ENCODE measurements at regions of chr1 and their contacts with region 1.

Region 1: DNA sequence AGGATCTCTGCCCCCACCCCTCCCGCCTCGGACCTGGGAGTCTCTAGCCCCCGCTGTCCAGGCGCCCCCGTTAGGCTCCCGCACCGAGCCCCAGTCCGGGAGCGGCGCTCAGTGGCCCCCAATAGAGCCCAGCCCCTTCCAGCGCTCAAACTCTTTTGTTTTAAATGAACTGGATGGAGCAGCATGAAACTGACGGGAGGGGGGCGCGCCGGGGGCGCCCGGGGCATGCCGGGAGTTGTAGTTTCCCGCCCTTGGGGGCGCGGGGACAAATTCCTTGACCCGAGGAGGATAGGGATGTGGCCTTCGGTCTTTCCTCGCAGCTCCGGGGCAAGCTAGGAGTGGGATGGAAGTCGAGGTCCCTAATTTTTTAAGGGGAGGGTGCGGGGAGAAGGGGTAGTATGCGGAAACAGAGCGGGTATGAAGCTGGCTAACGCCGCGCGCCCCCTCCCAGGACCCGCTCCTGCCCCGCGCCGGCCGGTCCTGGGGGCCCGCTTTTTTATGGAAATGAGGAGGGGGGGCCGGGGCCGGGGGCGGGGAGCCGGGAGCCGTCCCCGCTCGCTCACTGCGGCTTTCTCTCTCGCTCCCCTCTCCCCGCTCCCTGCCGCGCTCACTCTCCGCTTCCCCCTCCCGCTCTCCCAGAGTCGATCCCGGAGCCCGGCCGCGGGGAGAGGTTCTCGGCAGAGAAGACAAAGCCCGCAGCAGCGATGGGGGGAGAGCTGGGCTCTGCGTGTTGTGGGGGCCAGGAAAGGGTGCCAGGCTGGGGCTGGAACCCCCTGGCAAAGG is at the start of gene MEX3A:
- DNase-seq: peak; percentile 99
- ATAC-seq: peak; percentile 73
- H3K4me3 Mint-ChIP-seq: peak within 1 kb of the TSS; percentile 97
- H3K27ac Mint-ChIP-seq: peak within 1 kb of the TSS; percentile 93
- H3K4me1 Mint-ChIP-seq: peaks cover 65% of the 10 kb centered on the region
- H3K27me3 Mint-ChIP-seq: no peaks in the 10 kb centered on the region
- CTCF ChIP-seq: no peak
- total RNA-seq, gene MEX3A: 66.3 to 79.1 TPM (median 70.6 TPM) in 3 replicates

Region 2: DNA sequence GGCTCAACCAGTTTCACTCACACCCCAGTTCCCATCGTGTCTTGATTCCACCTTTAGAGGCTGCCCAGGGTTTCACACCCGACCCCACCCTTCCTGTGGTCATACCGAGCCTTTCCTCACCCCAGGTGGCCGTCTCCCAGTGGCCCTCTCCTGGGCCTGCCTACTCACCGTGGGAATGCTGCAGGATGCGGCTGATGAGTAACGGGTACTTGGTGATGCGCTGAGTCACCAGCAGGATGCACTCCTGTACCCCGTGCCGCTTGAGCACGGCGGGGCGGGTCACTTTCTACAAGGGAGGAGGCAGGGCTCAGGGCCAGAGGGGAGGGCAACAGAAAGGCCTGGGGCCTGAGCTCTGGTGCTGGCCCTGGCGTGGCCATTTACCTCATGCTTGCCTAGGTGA is 120.6 kb before region 1 on chr1:
- CTCF ChIA-PET with region 1: no interaction called
- POLR2A ChIA-PET with region 1: no interaction called
- DNase-seq: no peak
- ATAC-seq: peak; percentile 63
- H3K4me3 Mint-ChIP-seq: no peak overlapping the region
- H3K27ac Mint-ChIP-seq: peak overlapping the region; percentile 82
- H3K4me1 Mint-ChIP-seq: peaks cover 6% of the 10 kb centered on the region
- H3K27me3 Mint-ChIP-seq: no peaks in the 10 kb centered on the region
- CTCF ChIP-seq: no peak

Region 3: GRCh38 chr1:156054500-156055280 is 27.8 kb before region 1 on chr1 and contains the start of gene LAMTOR2:
- CTCF ChIA-PET with region 1: interaction called, 16 read pairs
- POLR2A ChIA-PET with region 1: interaction called, 10 read pairs
- DNase-seq: peak; percentile 99
- ATAC-seq: peak; percentile 69
- H3K4me3 Mint-ChIP-seq: peak within 1 kb of the TSS; percentile 98
- H3K27ac Mint-ChIP-seq: peak within 1 kb of the TSS; percentile 97
- H3K4me1 Mint-ChIP-seq: peaks cover 15% of the 10 kb centered on the region
- H3K27me3 Mint-ChIP-seq: no peaks in the 10 kb centered on the region
- CTCF ChIP-seq: no peak
- total RNA-seq, gene LAMTOR2: 62.4 to 75.7 TPM (median 73.8 TPM) in 3 replicates

Region 4: GRCh38 chr1:156067262-156067661 is 15.2 kb before region 1 on chr1:
- CTCF ChIA-PET with region 1: interaction called, 13 read pairs
- POLR2A ChIA-PET with region 1: interaction called, 4 read pairs
- DNase-seq: no peak
- ATAC-seq: no peak
- H3K4me3 Mint-ChIP-seq: no peak overlapping the region
- H3K27ac Mint-ChIP-seq: no peak overlapping the region
- H3K4me1 Mint-ChIP-seq: peaks cover 36% of the 10 kb centered on the region
- H3K27me3 Mint-ChIP-seq: no peaks in the 10 kb centered on the region
- CTCF ChIP-seq: no peak

Region 5: DNA sequence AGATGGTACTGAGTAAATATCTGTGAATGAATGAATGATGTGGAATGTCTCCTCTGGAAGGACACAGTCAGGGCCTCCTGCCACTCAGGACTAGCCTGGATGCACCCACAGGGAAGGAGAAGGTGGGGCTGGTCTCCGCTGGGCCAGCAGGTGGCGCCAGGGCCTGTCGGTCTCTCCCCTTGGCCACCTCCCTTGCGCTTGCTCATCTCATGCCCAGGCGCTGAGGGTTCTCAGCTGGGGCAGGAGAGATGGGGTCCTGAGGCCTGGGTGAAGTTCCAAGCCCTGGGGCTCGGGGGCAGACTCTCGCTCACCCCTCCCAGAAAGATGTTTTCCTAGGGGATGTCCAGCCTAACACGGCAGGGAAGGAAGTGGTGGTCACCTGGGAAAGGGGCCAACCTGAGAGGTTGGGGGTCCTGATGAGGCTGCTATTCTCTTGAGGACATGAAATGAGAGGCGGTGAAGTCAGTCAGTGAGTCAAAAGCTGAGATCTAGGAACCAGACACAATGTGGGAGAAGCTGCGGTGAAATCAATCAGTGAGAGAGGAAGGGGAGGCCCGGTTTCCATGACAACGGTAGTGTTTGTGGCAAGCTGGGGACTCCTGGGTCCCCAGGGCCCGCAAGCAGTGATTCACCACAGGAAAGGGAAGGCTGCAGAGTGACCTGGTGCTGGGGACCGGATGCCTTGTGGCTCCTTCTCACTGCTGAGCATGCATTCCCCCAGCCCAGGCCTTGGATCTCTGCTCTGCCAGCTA is 14.3 kb after region 1 on chr1:
- CTCF ChIA-PET with region 1: interaction called, 18 read pairs
- POLR2A ChIA-PET with region 1: interaction called, 4 read pairs
- DNase-seq: peak; percentile 92
- ATAC-seq: peak; percentile 94
- H3K4me3 Mint-ChIP-seq: no peak overlapping the region
- H3K27ac Mint-ChIP-seq: no peak overlapping the region
- H3K4me1 Mint-ChIP-seq: peaks cover 20% of the 10 kb centered on the region
- H3K27me3 Mint-ChIP-seq: no peaks in the 10 kb centered on the region
- CTCF ChIP-seq: peak; percentile 90

Region 6: GRCh38 chr1:156114101-156114916 is 31.8 kb after region 1 on chr1 and contains the start of gene LMNA:
- CTCF ChIA-PET with region 1: interaction called, 1,176 read pairs
- POLR2A ChIA-PET with region 1: interaction called, 12 read pairs
- DNase-seq: peak; percentile 80
- ATAC-seq: peak; percentile 91
- H3K4me3 Mint-ChIP-seq: peak within 1 kb of the TSS; percentile 93
- H3K27ac Mint-ChIP-seq: no peak within 1 kb of the TSS
- H3K4me1 Mint-ChIP-seq: peaks cover 34% of the 10 kb centered on the region
- H3K27me3 Mint-ChIP-seq: peaks cover 18% of the 10 kb centered on the region
- CTCF ChIP-seq: no peak
- total RNA-seq, gene LMNA: 40.7 to 68.8 TPM (median 46.2 TPM) in 3 replicates

Region 7: GRCh38 chr1:156245451-156246232 is 163.1 kb after region 1 on chr1:
- CTCF ChIA-PET with region 1: no interaction called
- POLR2A ChIA-PET with region 1: no interaction called
- DNase-seq: peak; percentile 63
- ATAC-seq: peak; percentile 23
- H3K4me3 Mint-ChIP-seq: peak overlapping the region; percentile 74
- H3K27ac Mint-ChIP-seq: no peak overlapping the region
- H3K4me1 Mint-ChIP-seq: peaks cover 22% of the 10 kb centered on the region
- H3K27me3 Mint-ChIP-seq: peaks cover 4% of the 10 kb centered on the region
- CTCF ChIP-seq: no peak